ENCODE measurements at regions of chr15 and their contacts with region 1.

Region 1: DNA sequence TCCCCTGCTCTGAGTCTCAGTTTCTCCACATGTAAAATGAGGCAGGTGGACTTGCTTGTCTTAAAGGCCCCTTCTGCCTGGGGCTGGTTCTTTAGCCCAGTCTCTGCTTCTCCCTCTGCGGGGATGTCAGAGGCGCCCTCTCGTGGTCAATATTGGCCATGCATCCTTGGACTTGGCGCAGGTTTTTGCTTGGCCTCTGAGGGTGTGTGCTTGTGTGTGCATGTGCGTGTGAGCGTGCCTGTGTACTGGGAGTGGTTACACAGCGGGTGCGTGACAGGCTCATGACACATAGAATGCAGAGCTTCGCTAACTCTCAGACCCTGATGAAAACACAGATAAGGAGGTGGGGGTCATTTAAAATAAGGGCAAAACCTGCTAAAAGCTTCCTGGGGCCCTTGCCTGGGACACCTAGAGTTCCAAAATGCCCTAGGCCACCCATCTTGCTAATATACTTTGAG is 160.9 kb downstream of the SMAD6 start:
- DNase-seq: peak; percentile 96

Region 2: GRCh38 chr15:66609876-66610275 is 253.0 kb before region 1 on chr15:
- intact Hi-C with region 1: loop called in 1 of 2 experiments (anchors 5 kb)
- DNase-seq: no peak

Region 3: GRCh38 chr15:66714543-66714981 is 148.3 kb before region 1 on chr15:
- intact Hi-C with region 1: loop called in 1 of 2 experiments (anchors 5 kb)
- DNase-seq: no peak

Region 4: GRCh38 chr15:66730168-66731021 is 132.5 kb before region 1 on chr15:
- intact Hi-C with region 1: no loop called
- DNase-seq: no peak